ENCODE measurements at regions of chr10 and their contacts with region 1.

Region 1: DNA sequence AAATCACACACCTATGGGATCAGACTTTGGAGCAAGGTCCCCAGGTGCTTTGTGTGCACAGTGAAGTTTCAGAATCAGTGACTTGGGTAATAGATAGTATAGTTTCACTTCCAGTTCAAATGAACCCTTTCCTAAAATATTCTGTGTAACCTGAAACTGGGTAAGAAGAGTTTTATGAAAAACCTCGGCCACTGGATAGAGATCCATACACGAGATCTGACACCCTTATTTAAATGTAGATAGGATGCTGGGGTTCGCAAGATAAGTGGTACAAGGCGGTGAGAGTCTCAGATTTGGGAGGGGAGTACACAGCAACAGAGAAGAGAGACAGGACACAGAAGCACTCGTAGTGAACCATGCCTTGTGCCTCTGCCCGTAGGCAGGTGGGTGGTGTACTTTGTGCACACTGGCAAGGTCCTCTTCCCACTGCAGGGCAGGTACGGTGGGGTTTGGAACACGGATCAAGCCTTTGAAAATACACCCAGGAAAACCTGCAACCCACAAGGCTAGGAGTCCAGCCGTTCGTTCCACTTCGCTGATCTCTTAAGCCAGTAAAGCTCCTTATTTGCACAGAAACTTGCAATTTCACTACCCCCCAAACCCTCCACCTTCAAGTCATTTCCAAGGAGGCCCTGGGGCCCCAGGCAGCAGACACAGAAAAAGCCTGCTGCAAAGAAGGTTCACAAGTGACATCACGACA is 162.8 kb downstream of the USP6NL start:
- DNase-seq: peak; percentile 76
- H3K4me3 ChIP-seq: peak overlapping the region; percentile 60
- H3K27ac ChIP-seq: peak overlapping the region; percentile 89
- H3K4me1 ChIP-seq: peaks cover 53% of the 10 kb centered on the region
- CTCF ChIP-seq: no peak

Region 2: DNA sequence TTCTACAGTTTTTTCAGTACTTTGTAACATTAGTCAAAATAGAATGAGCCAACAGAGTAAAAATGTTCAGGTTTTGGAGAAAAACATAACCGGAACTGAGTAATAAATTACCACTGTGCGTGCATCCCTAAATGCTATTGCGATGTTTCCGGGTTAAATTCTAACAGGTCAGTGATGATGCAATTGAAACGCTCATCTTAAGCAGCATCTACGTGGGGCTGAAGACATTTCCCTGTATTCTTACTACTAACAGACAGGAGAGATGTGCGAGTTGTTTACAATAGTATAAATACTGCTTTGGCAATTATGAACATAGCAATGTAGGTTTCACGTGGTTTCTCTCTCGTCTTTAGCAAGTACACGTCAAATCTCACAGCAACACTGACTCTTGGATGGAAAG is 13.4 kb after region 1 on chr10:
- CTCF ChIA-PET with region 1: no interaction called
- POLR2A ChIA-PET with region 1: interaction called, 20 read pairs
- intact Hi-C with region 1: no loop called
- DNase-seq: no peak
- H3K4me3 ChIP-seq: no peak overlapping the region
- H3K27ac ChIP-seq: no peak overlapping the region
- H3K4me1 ChIP-seq: peaks cover 6% of the 10 kb centered on the region
- CTCF ChIP-seq: no peak